ENCODE measurements at regions of chr4 and their contacts with region 1.

Region 1: GRCh38 chr4:55546756-55547465 is at the start of gene CLOCK:
- DNase-seq: peak; percentile 95
- H3K4me3 Mint-ChIP-seq: peak within 1 kb of the TSS; percentile 84
- H3K27ac Mint-ChIP-seq: peak within 1 kb of the TSS; percentile 88
- H3K4me1 Mint-ChIP-seq: peaks cover 25% of the 10 kb centered on the region
- H3K27me3 Mint-ChIP-seq: peaks cover 30% of the 10 kb centered on the region
- total RNA-seq, gene CLOCK: 9.8 and 10.8 TPM in 2 replicates

Region 2: DNA sequence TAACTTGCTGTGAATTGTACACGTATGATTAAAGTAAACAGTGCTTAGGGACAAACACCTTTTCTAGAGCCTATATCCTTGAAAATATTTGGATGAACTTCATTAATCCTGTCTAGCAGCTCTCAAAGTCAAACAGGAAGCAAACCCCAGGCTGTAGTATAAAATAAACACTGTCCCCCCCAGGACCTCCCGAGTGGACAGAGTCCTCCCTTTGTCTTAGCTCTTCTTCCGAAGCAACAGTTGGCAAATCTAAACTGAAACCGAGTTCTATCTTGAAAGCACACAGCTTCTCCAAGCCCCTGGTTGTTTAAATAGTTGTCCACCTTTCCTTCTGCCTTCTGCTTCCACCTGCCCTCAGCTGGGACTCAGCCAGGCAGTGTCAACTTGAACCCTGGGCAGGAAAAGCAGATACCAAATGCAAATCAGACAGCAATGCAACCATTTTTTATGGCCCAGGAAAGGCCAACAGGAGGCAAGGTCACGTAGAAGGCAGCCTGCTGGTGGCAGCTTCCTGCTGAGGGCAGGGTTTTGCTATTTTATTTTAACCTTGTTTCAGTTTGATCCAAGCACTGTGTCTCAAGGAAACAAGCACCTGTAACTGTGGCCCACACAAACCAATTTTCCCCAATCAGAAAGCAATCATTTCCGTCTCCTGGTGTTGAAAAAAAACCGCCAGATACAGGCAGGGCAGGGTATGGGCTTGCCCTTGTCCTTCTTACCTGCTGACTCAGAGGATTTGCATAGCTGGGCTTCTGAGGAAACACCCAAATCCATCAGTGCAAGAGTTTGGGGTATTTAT is 999.4 kb before region 1 on chr4:
- intact Hi-C with region 1: loop called (anchors 5 kb)
- DNase-seq: peak; percentile 65
- H3K4me3 Mint-ChIP-seq: peak overlapping the region; percentile 36
- H3K27ac Mint-ChIP-seq: peak overlapping the region; percentile 86
- H3K4me1 Mint-ChIP-seq: peaks cover 4% of the 10 kb centered on the region
- H3K27me3 Mint-ChIP-seq: no peaks in the 10 kb centered on the region

Region 3: DNA sequence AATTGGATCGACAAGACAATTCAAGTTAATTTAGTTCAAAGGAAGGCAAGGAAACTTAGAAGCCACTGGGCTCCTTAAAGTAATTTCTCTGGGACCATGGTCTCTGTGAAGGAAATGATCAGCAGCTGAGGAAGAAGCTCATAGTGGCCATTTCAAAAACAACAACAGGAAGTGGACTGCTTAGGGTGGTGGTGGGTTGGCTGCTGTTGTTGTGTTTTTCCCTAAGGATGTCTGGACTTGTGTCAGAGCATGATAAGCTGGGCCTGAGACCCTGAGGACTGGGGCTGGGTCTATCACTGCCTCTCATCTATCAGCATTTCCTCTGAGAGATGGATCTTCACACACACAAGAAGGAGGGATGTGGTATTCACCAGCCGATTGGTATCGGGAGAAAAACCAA is 439.9 kb before region 1 on chr4:
- intact Hi-C with region 1: no loop called
- DNase-seq: no peak
- H3K4me3 Mint-ChIP-seq: no peak overlapping the region
- H3K27ac Mint-ChIP-seq: no peak overlapping the region
- H3K4me1 Mint-ChIP-seq: no peaks in the 10 kb centered on the region
- H3K27me3 Mint-ChIP-seq: no peaks in the 10 kb centered on the region

Region 4: GRCh38 chr4:55336136-55337034 is 210.5 kb before region 1 on chr4:
- intact Hi-C with region 1: loop called (anchors 5 kb)
- DNase-seq: peak; percentile 52
- H3K4me3 Mint-ChIP-seq: peak overlapping the region; percentile 26
- H3K27ac Mint-ChIP-seq: peak overlapping the region; percentile 86
- H3K4me1 Mint-ChIP-seq: peaks cover 20% of the 10 kb centered on the region
- H3K27me3 Mint-ChIP-seq: no peaks in the 10 kb centered on the region

Region 5: DNA sequence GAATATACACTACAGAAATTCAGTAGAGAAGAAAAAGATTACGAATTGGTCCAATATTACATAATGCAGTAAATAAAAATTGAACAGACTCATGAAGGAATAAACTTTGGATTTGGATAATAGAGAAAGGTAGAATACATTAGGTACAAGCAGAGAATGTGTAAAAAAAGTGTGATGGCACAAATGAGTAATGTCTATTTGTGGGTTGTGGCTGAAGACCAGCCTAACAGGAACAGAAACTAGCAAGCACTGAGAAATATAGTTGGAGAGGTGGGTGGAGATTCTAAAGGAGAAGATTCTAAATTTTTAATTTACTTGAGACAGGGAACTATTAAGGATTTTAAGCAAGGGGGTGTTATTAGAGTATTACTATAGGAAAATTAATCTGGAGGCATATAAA is 15.0 kb after region 1 on chr4:
- intact Hi-C with region 1: loop called (anchors 2 kb)
- DNase-seq: peak; percentile 40
- H3K4me3 Mint-ChIP-seq: no peak overlapping the region
- H3K27ac Mint-ChIP-seq: no peak overlapping the region
- H3K4me1 Mint-ChIP-seq: peaks cover 6% of the 10 kb centered on the region
- H3K27me3 Mint-ChIP-seq: peaks cover 6% of the 10 kb centered on the region

Region 6: DNA sequence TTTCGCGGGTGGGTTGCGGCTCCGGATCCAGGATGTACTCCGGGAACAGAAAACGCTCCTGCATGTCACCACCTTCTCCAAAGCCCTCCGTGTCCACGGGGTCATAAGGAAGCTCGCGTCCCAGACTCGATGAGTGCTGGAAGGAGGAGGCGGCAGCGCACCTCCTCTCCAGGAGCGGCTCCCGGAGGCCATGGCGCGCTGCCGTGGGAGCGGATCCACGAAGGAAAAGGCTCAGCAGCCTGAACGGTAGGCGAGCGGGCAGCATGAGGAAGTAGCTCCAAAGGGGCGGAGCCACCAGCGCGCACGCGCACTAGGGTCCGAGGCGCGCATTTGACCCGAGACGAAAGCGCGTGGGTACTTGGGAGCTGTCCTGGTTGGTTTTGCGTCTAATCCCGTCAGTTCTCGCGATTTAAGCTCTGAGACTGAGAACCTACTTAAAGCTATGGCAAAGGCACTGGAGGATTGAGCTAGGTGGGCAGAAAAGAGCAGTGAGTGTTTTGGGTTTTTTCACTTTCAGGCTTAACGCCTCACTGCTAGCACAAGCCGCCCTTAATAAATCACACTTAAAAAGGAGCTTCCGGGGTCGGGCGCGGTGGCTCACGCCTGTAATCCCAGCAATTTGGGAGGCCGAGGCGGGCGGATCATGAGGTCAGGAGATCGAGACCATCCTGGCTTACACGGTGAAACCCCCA is 1430.6 kb after region 1 on chr4 and contains the start of gene NOA1:
- intact Hi-C with region 1: loop called (anchors 5 kb)
- DNase-seq: peak; percentile 100
- H3K4me3 Mint-ChIP-seq: peak within 1 kb of the TSS; percentile 98
- H3K27ac Mint-ChIP-seq: peak within 1 kb of the TSS; percentile 98
- H3K4me1 Mint-ChIP-seq: peaks cover 50% of the 10 kb centered on the region
- H3K27me3 Mint-ChIP-seq: peaks cover 2% of the 10 kb centered on the region
- total RNA-seq, gene NOA1: 17.7 and 18.5 TPM in 2 replicates

Measured in activated CD4-positive, alpha-beta T cell treated with anti-CD3 and anti-CD28 coated beads, Interleukin-2, amount 10 ng/mL, durations not matched to agents 24 days and 14 days (primary cell).